Endothelial cell of umbilical vein (primary cell): ENCODE measurements at regions of chr22 and their contacts with region 1.

Region 1: GRCh38 chr22:37933711-37934376 is 19.6 kb downstream of the C22orf23 start:
- DNase-seq: peak; percentile 95
- H3K4me3 ChIP-seq: no peak overlapping the region
- H3K27ac ChIP-seq: peak overlapping the region; percentile 30
- H3K4me1 ChIP-seq: peaks cover 29% of the 10 kb centered on the region
- H3K27me3 ChIP-seq: no peaks in the 10 kb centered on the region
- CTCF ChIP-seq: peak; percentile 99 to 100
- POLR2A ChIP-seq: peak; percentile 27

Region 2: DNA sequence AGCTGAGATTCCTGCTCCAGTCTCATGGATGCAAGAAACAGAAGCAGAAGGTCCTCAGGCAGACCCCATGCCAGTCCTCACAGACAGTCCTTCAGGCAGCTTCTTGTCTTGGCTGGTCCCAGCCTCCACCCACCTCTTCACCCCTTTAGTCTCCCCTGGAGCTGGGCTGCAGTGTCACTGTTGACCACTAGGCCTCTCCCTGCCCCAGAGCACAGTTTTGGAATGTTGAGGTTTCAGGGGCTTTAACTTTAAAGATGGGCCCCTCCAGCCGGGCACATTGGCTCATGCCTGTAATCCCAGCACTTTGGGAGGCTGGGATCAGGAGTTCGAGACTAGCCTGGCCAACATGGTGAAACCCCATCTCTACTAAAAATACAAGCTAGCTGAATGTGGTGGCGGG is 165.6 kb before region 1 on chr22:
- CTCF ChIA-PET with region 1: no interaction called
- POLR2A ChIA-PET with region 1: no interaction called
- dilution Hi-C with region 1: no loop called
- intact Hi-C with region 1: no loop called
- DNase-seq: no peak
- H3K4me3 ChIP-seq: no peak overlapping the region
- H3K27ac ChIP-seq: no peak overlapping the region
- H3K4me1 ChIP-seq: no peaks in the 10 kb centered on the region
- H3K27me3 ChIP-seq: no peaks in the 10 kb centered on the region
- CTCF ChIP-seq: peak; percentile 24 to 29
- POLR2A ChIP-seq: no peak

Region 3: DNA sequence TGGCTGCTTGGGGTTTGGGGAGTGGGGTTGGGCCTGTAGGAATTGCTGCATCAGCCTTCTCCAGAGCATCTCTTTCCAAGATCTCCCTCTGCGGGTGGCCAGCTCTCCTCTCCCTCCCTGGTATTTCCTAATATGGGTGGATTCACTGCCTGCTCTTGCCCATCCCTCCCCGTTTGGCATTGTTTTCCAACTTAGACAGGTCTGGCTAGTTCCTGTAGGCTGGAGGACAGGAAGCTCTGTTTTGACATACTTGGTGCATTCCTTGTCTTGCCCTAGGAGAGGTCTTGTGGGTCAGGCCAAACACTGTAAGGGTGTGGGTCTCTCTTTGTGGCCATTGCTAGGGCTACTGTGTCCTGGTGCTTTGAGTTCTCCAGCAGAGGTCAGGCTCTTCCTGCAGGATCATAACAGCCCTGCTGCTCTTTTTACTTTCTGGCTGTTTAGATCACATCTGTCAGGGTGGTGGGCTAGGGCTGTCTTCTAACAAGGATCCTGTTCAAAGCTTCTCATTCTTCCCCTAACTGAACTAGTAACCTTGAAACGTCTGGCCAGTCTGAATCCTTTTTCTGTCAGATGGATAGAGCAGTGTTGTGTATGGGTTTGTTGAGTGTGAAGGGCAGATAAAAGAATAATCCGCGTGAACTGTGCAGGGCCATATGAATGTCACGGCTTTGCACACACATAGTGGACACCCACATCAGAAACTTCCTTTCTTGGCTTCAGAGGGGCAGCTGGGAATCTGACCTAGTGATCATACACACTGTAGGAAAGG is 46.0 kb before region 1 on chr22:
- CTCF ChIA-PET with region 1: interaction called, 48 read pairs
- POLR2A ChIA-PET with region 1: no interaction called
- dilution Hi-C with region 1: no loop called
- intact Hi-C with region 1: loop called (anchors 1 kb)
- DNase-seq: peak; percentile 57
- H3K4me3 ChIP-seq: no peak overlapping the region
- H3K27ac ChIP-seq: peak overlapping the region; percentile 16
- H3K4me1 ChIP-seq: peaks cover 10% of the 10 kb centered on the region
- H3K27me3 ChIP-seq: no peaks in the 10 kb centered on the region
- CTCF ChIP-seq: peak; percentile 55 to 75
- POLR2A ChIP-seq: no peak

Region 4: GRCh38 chr22:37905534-37906363 is 28.1 kb before region 1 on chr22 and contains the start of gene MICALL1:
- CTCF ChIA-PET with region 1: interaction called, 21 read pairs
- POLR2A ChIA-PET with region 1: no interaction called
- dilution Hi-C with region 1: no loop called
- intact Hi-C with region 1: loop called (anchors 1 kb)
- DNase-seq: peak; percentile 69
- H3K4me3 ChIP-seq: peak within 1 kb of the TSS; percentile 55 to 76 (median 67)
- H3K27ac ChIP-seq: peak within 1 kb of the TSS; percentile 94
- H3K4me1 ChIP-seq: peaks cover 20% of the 10 kb centered on the region
- H3K27me3 ChIP-seq: no peaks in the 10 kb centered on the region
- CTCF ChIP-seq: no peak
- POLR2A ChIP-seq: peak; percentile 73
- total RNA-seq, gene MICALL1: 65.2 and 66.9 TPM in 2 replicates

Region 5: GRCh38 chr22:37953437-37954179 is 19.8 kb after region 1 on chr22 and contains the starts of genes C22orf23 and POLR2F:
- CTCF ChIA-PET with region 1: interaction called, 5 read pairs
- POLR2A ChIA-PET with region 1: interaction called, 3 read pairs
- dilution Hi-C with region 1: no loop called
- intact Hi-C with region 1: loop called (anchors 2 kb)
- DNase-seq: peak; percentile 97
- H3K4me3 ChIP-seq: peak within 1 kb of the TSS; percentile 7 to 96 (median 54)
- H3K27ac ChIP-seq: no peak within 1 kb of the TSS
- H3K4me1 ChIP-seq: peaks cover 14% of the 10 kb centered on the region
- H3K27me3 ChIP-seq: no peaks in the 10 kb centered on the region
- CTCF ChIP-seq: no peak
- POLR2A ChIP-seq: peak; percentile 93
- total RNA-seq, gene C22orf23: 0.44 and 0.46 TPM in 2 replicates
- total RNA-seq, gene POLR2F: 98.3 and 106 TPM in 2 replicates

Region 6: DNA sequence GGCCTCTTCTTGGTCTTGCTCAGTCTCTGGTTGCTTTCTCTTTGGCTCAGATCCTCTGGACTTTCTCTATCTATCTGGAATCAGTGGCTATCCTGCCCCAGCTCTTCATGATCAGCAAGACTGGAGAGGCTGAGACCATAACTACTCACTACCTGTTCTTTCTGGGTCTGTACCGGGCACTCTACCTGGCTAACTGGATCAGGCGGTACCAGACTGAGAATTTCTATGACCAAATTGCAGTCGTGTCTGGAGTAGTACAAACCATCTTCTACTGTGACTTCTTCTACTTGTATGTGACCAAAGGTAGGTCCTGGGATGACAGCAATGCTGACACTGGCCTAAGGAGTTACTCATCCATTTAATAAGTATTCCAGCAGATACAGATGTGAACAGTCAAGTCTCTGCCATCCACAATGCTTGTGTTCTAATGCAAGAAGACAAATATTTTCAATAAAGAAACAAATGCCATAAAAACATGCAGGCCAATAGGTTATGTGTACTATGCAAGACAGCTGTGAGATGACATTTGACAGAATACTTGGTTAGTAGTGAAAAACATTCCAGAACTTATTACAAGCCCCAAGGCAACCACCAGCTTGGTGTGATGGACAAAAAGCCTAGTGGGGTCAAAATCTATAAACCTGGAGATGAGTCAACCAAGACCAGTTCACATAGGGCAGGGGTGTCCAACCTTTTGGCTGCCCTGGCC is 547.5 kb after region 1 on chr22:
- CTCF ChIA-PET with region 1: no interaction called
- POLR2A ChIA-PET with region 1: no interaction called
- dilution Hi-C with region 1: no loop called
- intact Hi-C with region 1: no loop called
- DNase-seq: no peak
- H3K4me3 ChIP-seq: no peak overlapping the region
- H3K27ac ChIP-seq: no peak overlapping the region
- H3K4me1 ChIP-seq: no peaks in the 10 kb centered on the region
- H3K27me3 ChIP-seq: no peaks in the 10 kb centered on the region
- CTCF ChIP-seq: no peak
- POLR2A ChIP-seq: no peak